Activated CD8-positive, alpha-beta memory T cell treated with anti-CD3 and anti-CD28 coated beads, Interleukin-2, amount 10 ng/mL, durations not matched to agents 7 days and 5 days (primary cell): ENCODE measurements at regions of chr6 and their contacts with region 1.

Region 1: DNA sequence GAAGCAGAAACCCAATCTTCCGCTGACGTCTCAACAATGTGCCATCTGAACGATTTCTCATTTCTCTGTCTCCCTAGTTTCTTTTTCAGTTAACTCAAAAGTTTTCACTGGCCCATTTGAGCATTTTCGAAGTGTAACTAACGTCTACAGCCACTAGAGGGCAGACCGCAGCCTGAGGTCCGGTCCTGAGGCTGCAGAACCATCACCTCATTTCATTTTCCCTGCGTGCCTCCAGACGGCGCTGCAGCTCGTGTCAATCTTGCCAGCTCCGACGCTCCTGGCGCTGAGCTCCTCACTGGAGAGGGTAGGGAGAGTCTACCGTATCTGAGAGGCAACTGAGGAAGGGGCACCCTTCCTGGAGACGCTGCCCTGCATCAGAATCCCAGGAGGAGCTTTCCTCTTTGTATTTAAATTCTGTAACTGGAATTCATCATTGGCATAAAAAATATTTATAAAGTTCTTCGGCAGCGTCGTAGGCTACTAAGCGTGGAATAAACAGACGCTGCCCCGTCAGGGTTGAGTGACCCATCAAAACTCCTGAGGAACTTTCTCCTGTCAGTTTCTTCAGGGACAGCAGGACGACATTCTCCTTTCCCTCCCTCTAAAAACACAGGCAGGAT is 28.5 kb upstream of the DTNBP1 start:
- DNase-seq: peak; percentile 87
- ATAC-seq: peak; percentile 98
- H3K4me3 Mint-ChIP-seq: peak overlapping the region; percentile 17
- H3K27ac Mint-ChIP-seq: peak overlapping the region; percentile 37
- H3K4me1 Mint-ChIP-seq: peaks cover 9% of the 10 kb centered on the region
- H3K27me3 Mint-ChIP-seq: peaks cover 6% of the 10 kb centered on the region

Region 2: GRCh38 chr6:15730922-15731321 is 39.6 kb after region 1 on chr6:
- CTCF ChIA-PET with region 1: no interaction called
- DNase-seq: no peak
- ATAC-seq: no peak
- H3K4me3 Mint-ChIP-seq: no peak overlapping the region
- H3K27ac Mint-ChIP-seq: no peak overlapping the region
- H3K4me1 Mint-ChIP-seq: peaks cover 8% of the 10 kb centered on the region
- H3K27me3 Mint-ChIP-seq: peaks cover 20% of the 10 kb centered on the region

Region 3: DNA sequence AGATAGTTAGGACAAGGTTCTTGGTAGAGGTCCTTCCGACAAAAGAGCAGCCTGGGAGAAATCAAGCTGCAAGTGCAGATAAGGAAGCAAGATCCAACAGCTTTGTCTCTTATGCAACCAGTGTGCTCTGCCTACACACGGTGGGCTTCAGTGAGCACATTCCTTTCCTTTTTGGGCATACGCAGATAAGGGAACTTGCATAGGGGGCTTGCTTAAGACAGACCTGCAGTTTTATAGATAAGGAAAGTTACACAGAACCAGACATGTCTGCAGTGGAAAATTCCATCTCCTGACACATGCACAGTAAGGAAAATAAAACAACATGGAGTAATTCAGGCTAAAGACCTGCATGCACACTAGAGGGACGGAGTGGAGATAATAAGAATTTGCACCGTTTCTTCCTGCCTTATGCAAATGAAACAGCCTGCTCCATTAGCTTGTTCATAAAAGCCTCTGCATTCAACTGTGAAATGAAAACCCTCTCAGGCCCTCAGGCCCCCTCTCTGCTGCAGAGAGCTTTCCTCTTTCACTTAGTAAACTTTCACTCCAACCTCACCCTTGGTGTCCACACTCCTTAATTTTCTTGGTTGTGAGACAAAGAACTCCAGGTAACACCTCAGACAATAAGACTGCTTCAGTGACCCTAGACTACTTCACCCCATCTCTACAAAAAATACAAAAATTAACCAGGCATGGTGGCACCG is 340.1 kb after region 1 on chr6:
- CTCF ChIA-PET with region 1: no interaction called
- DNase-seq: no peak
- ATAC-seq: no peak
- H3K4me3 Mint-ChIP-seq: no peak overlapping the region
- H3K27ac Mint-ChIP-seq: no peak overlapping the region
- H3K4me1 Mint-ChIP-seq: no peaks in the 10 kb centered on the region
- H3K27me3 Mint-ChIP-seq: peaks cover 17% of the 10 kb centered on the region

Region 4: GRCh38 chr6:16128759-16129622 is 437.6 kb after region 1 on chr6 and contains the start of gene MYLIP:
- CTCF ChIA-PET with region 1: interaction called, 11 read pairs
- DNase-seq: peak; percentile 97
- ATAC-seq: peak; percentile 82
- H3K4me3 Mint-ChIP-seq: peak within 1 kb of the TSS; percentile 91
- H3K27ac Mint-ChIP-seq: peak within 1 kb of the TSS; percentile 89
- H3K4me1 Mint-ChIP-seq: peaks cover 33% of the 10 kb centered on the region
- H3K27me3 Mint-ChIP-seq: peaks cover 21% of the 10 kb centered on the region
- total RNA-seq, gene MYLIP: 9.1 to 14.8 TPM

Region 5: GRCh38 chr6:16206595-16207037 is 515.3 kb after region 1 on chr6:
- CTCF ChIA-PET with region 1: interaction called, 51 read pairs
- DNase-seq: peak; percentile 55
- ATAC-seq: peak; percentile 39
- H3K4me3 Mint-ChIP-seq: no peak overlapping the region
- H3K27ac Mint-ChIP-seq: no peak overlapping the region
- H3K4me1 Mint-ChIP-seq: peaks cover 9% of the 10 kb centered on the region
- H3K27me3 Mint-ChIP-seq: peaks cover 32% of the 10 kb centered on the region